Gastrocnemius medialis (tissue), 4 donors: ENCODE measurements at regions of chr2 and their contacts with region 1.

Region 1: GRCh38 chr2:214471990-214472389 is 61.1 kb downstream of the VWC2L start:
- DNase-seq: no peak
- ATAC-seq: no peak
- H3K4me3 ChIP-seq: no peak overlapping the region
- H3K27ac ChIP-seq: no peak overlapping the region
- H3K4me1 ChIP-seq: no peaks in the 10 kb centered on the region
- H3K27me3 ChIP-seq: no peaks in the 10 kb centered on the region
- CTCF ChIP-seq: no peak
- POLR2A ChIP-seq: no peak

Region 2: GRCh38 chr2:214450118-214450894 is 21.7 kb before region 1 on chr2:
- in situ Hi-C with region 1: no loop called
- intact Hi-C with region 1: no loop called
- DNase-seq: no peak
- ATAC-seq: no peak
- H3K4me3 ChIP-seq: no peak overlapping the region
- H3K27ac ChIP-seq: no peak overlapping the region
- H3K4me1 ChIP-seq: no peaks in the 10 kb centered on the region
- H3K27me3 ChIP-seq: no peaks in the 10 kb centered on the region
- CTCF ChIP-seq: no peak
- POLR2A ChIP-seq: no peak

Region 3: GRCh38 chr2:214492152-214492551 is 20.2 kb after region 1 on chr2:
- in situ Hi-C with region 1: no loop called
- intact Hi-C with region 1: loop called (anchors 1 kb)
- DNase-seq: no peak
- ATAC-seq: no peak
- H3K4me3 ChIP-seq: no peak overlapping the region
- H3K27ac ChIP-seq: no peak overlapping the region
- H3K4me1 ChIP-seq: peaks cover 17 to 31% of the 10 kb centered on the region in 2 donors
- H3K27me3 ChIP-seq: no peaks in the 10 kb centered on the region
- CTCF ChIP-seq: no peak
- POLR2A ChIP-seq: no peak